MCF 10A (cell line): ENCODE measurements at regions of chr1 and their contacts with region 1.

Region 1: GRCh38 chr1:10032590-10033358 is at the start of gene UBE4B:
- DNase-seq: peak; percentile 98
- H3K4me3 Mint-ChIP-seq: peak within 1 kb of the TSS; percentile 80
- H3K27ac Mint-ChIP-seq: peak within 1 kb of the TSS; percentile 78
- H3K4me1 Mint-ChIP-seq: peaks cover 18% of the 10 kb centered on the region
- H3K27me3 Mint-ChIP-seq: no peaks in the 10 kb centered on the region
- CTCF ChIP-seq: peak; percentile 83
- total RNA-seq, gene UBE4B: 31.2 and 43.1 TPM in 2 replicates

Region 2: GRCh38 chr1:9874959-9875635 is 157.7 kb before region 1 on chr1:
- CTCF ChIA-PET with region 1: interaction called, 5 read pairs
- POLR2A ChIA-PET with region 1: interaction called, 3 read pairs
- intact Hi-C with region 1: loop called (anchors 5 kb)
- DNase-seq: peak; percentile 73
- H3K4me3 Mint-ChIP-seq: no peak overlapping the region
- H3K27ac Mint-ChIP-seq: no peak overlapping the region
- H3K4me1 Mint-ChIP-seq: peaks cover 11% of the 10 kb centered on the region
- H3K27me3 Mint-ChIP-seq: no peaks in the 10 kb centered on the region
- CTCF ChIP-seq: peak; percentile 88

Region 3: DNA sequence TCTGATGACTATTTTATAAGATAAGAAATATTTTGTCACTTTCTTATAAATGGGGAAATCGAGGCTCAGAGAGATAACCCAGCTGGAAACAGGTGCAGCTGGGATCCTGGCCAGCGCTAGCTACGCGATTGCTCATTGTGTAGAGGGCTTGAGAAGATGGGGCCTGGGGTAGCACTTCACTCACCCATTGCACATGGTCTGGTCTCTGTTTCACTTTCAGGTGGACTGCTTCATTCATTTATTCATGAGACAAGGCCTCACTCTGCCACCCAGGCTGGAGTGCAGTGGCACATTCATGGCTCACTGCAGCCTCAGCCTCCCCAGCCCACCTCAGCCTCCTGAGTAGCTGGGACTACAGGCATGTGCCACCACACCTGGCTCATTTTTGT is 23.8 kb after region 1 on chr1:
- CTCF ChIA-PET with region 1: interaction called, 3 read pairs
- POLR2A ChIA-PET with region 1: interaction called, 19 read pairs
- intact Hi-C with region 1: no loop called
- DNase-seq: no peak
- H3K4me3 Mint-ChIP-seq: no peak overlapping the region
- H3K27ac Mint-ChIP-seq: peak overlapping the region; percentile 82
- H3K4me1 Mint-ChIP-seq: peaks cover 22% of the 10 kb centered on the region
- H3K27me3 Mint-ChIP-seq: no peaks in the 10 kb centered on the region
- CTCF ChIP-seq: no peak

Region 4: GRCh38 chr1:10108134-10108663 is 75.4 kb after region 1 on chr1:
- CTCF ChIA-PET with region 1: no interaction called
- POLR2A ChIA-PET with region 1: no interaction called
- intact Hi-C with region 1: loop called (anchors 5 kb)
- DNase-seq: peak; percentile 63
- H3K4me3 Mint-ChIP-seq: no peak overlapping the region
- H3K27ac Mint-ChIP-seq: peak overlapping the region; percentile 75
- H3K4me1 Mint-ChIP-seq: peaks cover 20% of the 10 kb centered on the region
- H3K27me3 Mint-ChIP-seq: no peaks in the 10 kb centered on the region
- CTCF ChIP-seq: no peak

Region 5: DNA sequence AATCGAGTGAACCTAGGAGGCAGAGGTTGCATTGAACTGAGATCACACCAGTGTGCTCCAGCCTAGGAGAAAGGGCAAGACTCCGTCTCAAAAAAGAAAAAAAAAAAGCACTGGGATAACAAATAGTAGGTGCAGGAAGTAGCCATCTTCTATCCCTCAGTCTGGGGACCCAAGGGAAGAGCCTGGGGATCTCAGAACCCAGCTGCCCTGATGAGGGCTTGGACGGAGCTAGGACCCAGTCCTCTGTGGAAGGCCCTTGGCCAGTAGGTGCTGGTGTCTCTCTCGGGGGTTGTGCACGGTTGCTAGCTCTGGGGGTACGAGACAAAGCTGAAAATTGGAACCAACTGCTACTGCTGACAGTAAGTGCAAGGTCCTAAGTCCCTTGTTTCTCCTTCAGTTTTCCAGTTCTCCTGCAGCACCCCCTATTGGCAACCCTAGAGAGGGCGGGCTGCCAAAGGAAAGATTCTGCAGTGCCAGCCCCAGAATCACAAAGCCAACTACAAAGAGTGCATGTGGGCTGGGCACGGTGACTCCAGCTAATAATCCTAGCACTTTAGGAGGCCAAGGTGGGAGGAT is 120.0 kb after region 1 on chr1:
- CTCF ChIA-PET with region 1: interaction called, 3 read pairs
- POLR2A ChIA-PET with region 1: no interaction called
- intact Hi-C with region 1: loop called (anchors 2 kb)
- DNase-seq: peak; percentile 61
- H3K4me3 Mint-ChIP-seq: no peak overlapping the region
- H3K27ac Mint-ChIP-seq: no peak overlapping the region
- H3K4me1 Mint-ChIP-seq: no peaks in the 10 kb centered on the region
- H3K27me3 Mint-ChIP-seq: no peaks in the 10 kb centered on the region
- CTCF ChIP-seq: peak; percentile 64

Region 6: GRCh38 chr1:10387413-10388079 is 354.8 kb after region 1 on chr1:
- CTCF ChIA-PET with region 1: no interaction called
- POLR2A ChIA-PET with region 1: no interaction called
- intact Hi-C with region 1: no loop called
- DNase-seq: peak; percentile 42
- H3K4me3 Mint-ChIP-seq: peak overlapping the region; percentile 12
- H3K27ac Mint-ChIP-seq: peak overlapping the region; percentile 75
- H3K4me1 Mint-ChIP-seq: peaks cover 6% of the 10 kb centered on the region
- H3K27me3 Mint-ChIP-seq: no peaks in the 10 kb centered on the region
- CTCF ChIP-seq: no peak

Region 7: DNA sequence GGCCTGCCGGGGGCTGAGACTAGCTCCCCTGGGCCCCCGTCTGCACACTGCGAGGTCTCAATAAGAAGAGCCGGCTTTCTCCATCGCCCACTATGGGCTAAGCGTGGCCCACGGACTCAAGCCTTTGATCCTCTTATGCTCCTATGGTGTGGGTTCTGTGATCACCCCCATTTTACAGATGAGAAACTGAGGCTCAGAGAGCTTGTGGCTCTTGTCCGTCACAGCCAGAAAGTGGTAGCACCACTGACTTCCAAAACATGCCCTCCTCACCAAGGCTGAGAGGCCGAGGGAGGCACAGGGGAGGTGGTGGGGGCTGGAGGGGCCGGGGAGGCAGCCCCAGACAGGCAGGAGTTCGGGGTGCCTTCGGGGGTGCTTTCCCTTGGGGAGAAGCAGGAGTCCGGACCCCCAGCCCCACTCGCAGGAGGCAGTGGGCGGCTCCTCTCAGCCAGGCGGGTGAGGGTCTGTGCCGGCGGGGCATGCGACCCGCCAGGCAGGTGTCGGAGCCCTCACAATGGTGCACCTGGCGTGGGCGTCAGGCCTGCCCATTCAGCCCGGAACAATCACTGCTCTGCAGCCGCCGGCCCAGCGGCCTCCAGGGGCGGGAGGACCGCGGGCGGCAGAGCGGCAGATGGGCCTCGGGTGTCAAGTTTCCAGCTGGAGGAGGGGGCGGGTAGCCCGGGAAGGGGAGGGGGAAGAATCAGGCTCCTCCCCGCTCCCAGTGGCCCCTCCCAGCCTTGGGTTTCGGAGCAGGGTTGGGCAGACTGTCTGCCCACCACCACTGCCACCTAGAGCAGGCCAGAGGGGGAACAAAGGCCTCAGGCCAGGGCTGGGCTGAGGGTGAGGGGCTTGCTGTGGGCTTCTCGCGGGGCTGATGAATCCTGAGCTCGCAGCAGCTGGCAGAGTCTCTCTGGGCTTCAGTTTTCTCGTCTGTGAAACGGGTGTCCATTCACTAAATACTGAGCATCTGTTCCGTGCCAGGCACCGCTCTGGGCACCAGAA is 802.9 kb after region 1 on chr1:
- CTCF ChIA-PET with region 1: no interaction called
- POLR2A ChIA-PET with region 1: no interaction called
- intact Hi-C with region 1: no loop called
- DNase-seq: peak; percentile 39
- H3K4me3 Mint-ChIP-seq: no peak overlapping the region
- H3K27ac Mint-ChIP-seq: no peak overlapping the region
- H3K4me1 Mint-ChIP-seq: peaks cover 34% of the 10 kb centered on the region
- H3K27me3 Mint-ChIP-seq: no peaks in the 10 kb centered on the region
- CTCF ChIP-seq: no peak